Thyroid gland (tissue), 4 donors: ENCODE measurements at regions of chr4 and their contacts with region 1.

Region 1: GRCh38 chr4:153083447-153083947 is 120.7 kb upstream of the TRIM2 start:
- DNase-seq: peak; percentile 60 to 62
- H3K4me3 ChIP-seq: no peak overlapping the region
- H3K27ac ChIP-seq: no peak overlapping the region
- H3K4me1 ChIP-seq: peaks cover 4 to 5% of the 10 kb centered on the region in 2 donors
- H3K27me3 ChIP-seq: no peaks in the 10 kb centered on the region
- CTCF ChIP-seq: peak in 5 of 6 experiments; percentile 32 to 71 (median 57)
- POLR2A ChIP-seq: no peak

Region 2: GRCh38 chr4:152843481-152844090 is 239.9 kb before region 1 on chr4:
- intact Hi-C with region 1: loop called (anchors 5 kb)
- DNase-seq: no peak
- H3K4me3 ChIP-seq: no peak overlapping the region
- H3K27ac ChIP-seq: no peak overlapping the region
- H3K4me1 ChIP-seq: no peaks in the 10 kb centered on the region
- H3K27me3 ChIP-seq: no peaks in the 10 kb centered on the region
- CTCF ChIP-seq: no peak
- POLR2A ChIP-seq: no peak

Region 3: GRCh38 chr4:153062652-153063168 is 20.8 kb before region 1 on chr4:
- intact Hi-C with region 1: loop called (anchors 2 kb)
- DNase-seq: no peak
- H3K4me3 ChIP-seq: no peak overlapping the region
- H3K27ac ChIP-seq: no peak overlapping the region
- H3K4me1 ChIP-seq: peaks cover 11 to 22% of the 10 kb centered on the region in 2 donors
- H3K27me3 ChIP-seq: no peaks in the 10 kb centered on the region
- CTCF ChIP-seq: no peak
- POLR2A ChIP-seq: no peak

Region 4: DNA sequence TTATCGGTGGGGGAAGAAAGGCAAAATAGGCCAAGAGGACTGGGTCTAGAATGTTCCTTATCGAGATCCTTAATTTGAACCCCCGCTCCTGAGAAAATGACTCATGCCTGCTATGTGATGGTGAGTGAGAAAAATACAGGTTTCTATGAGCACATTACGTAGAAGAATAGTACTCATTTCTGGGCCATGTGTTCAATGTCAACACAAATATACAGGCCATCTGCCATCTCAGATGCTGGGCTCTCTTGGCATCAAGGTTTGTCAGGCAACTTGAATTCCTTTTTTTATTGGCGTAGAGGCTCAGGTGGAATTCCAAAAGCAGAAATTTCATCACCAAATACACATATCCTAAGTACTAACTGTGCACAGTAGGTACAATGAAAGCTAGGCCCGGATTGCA is 39.4 kb after region 1 on chr4:
- intact Hi-C with region 1: loop called (anchors 5 kb)
- DNase-seq: no peak
- H3K4me3 ChIP-seq: no peak overlapping the region
- H3K27ac ChIP-seq: no peak overlapping the region
- H3K4me1 ChIP-seq: no peaks in the 10 kb centered on the region
- H3K27me3 ChIP-seq: no peaks in the 10 kb centered on the region
- CTCF ChIP-seq: no peak
- POLR2A ChIP-seq: no peak